CD4-positive, alpha-beta memory T cell (primary cell): ENCODE measurements at regions of chr20 and their contacts with region 1.

Region 1: GRCh38 chr20:1437235-1437904 is 29.3 kb downstream of the NSFL1C start:
- DNase-seq: peak; percentile 73 to 77 (median 74)
- H3K4me3 ChIP-seq: no peak overlapping the region
- H3K4me3 Mint-ChIP-seq: peak overlapping the region in 2 of 8 donors; percentile 27 to 53
- H3K27ac ChIP-seq: no peak overlapping the region
- H3K27ac Mint-ChIP-seq: peak overlapping the region in 3 of 7 donors; percentile 11 to 30 (median 22)
- H3K4me1 ChIP-seq: peaks cover 20% of the 10 kb centered on the region
- H3K4me1 Mint-ChIP-seq: peaks cover 23 to 59% (median 40%) of the 10 kb centered on the region in 4 donors
- H3K27me3 ChIP-seq: no peaks in the 10 kb centered on the region
- H3K27me3 Mint-ChIP-seq: peaks cover 0 to 4% of the 10 kb centered on the region in 2 donors

Region 2: GRCh38 chr20:1212607-1213396 is 224.6 kb before region 1 on chr20:
- CTCF ChIA-PET with region 1: interaction called, 5 read pairs
- POLR2A ChIA-PET with region 1: no interaction called
- intact Hi-C with region 1: loop called (anchors 5 kb)
- DNase-seq: peak; percentile 52 to 63 (median 60)
- H3K4me3 ChIP-seq: no peak overlapping the region
- H3K4me3 Mint-ChIP-seq: peak overlapping the region in 7 of 8 donors; percentile 4 to 52 (median 26)
- H3K27ac ChIP-seq: no peak overlapping the region
- H3K27ac Mint-ChIP-seq: peak overlapping the region in 1 of 7 donors; percentile 13
- H3K4me1 ChIP-seq: peaks cover 33% of the 10 kb centered on the region
- H3K4me1 Mint-ChIP-seq: peaks cover 19 to 28% (median 25%) of the 10 kb centered on the region in 4 donors
- H3K27me3 ChIP-seq: no peaks in the 10 kb centered on the region
- H3K27me3 Mint-ChIP-seq: peaks cover 3 to 6% of the 10 kb centered on the region in 2 donors

Region 3: GRCh38 chr20:1325173-1326030 is 112.0 kb before region 1 on chr20:
- CTCF ChIA-PET with region 1: interaction called, 4 read pairs
- POLR2A ChIA-PET with region 1: interaction called, 3 read pairs
- intact Hi-C with region 1: loop called (anchors 1 kb)
- DNase-seq: peak; percentile 98 to 99 (median 98)
- H3K4me3 ChIP-seq: peak overlapping the region; percentile 58 to 85
- H3K4me3 Mint-ChIP-seq: no peak overlapping the region
- H3K27ac ChIP-seq: peak overlapping the region; percentile 98
- H3K27ac Mint-ChIP-seq: no peak overlapping the region
- H3K4me1 ChIP-seq: peaks cover 42% of the 10 kb centered on the region
- H3K4me1 Mint-ChIP-seq: peaks cover 14 to 24% (median 19%) of the 10 kb centered on the region in 4 donors
- H3K27me3 ChIP-seq: no peaks in the 10 kb centered on the region
- H3K27me3 Mint-ChIP-seq: no peaks in the 10 kb centered on the region

Region 4: GRCh38 chr20:1392823-1393506 is 44.4 kb before region 1 on chr20 and contains the start of gene FKBP1A:
- CTCF ChIA-PET with region 1: interaction called, 9 read pairs
- POLR2A ChIA-PET with region 1: interaction called, 6 read pairs
- intact Hi-C with region 1: loop called (anchors 1 kb)
- DNase-seq: peak; percentile 90 to 91 (median 90)
- H3K4me3 ChIP-seq: peak within 1 kb of the TSS; percentile 58 to 80
- H3K4me3 Mint-ChIP-seq: peak within 1 kb of the TSS; percentile 87 to 98 (median 96)
- H3K27ac ChIP-seq: peak within 1 kb of the TSS; percentile 67
- H3K27ac Mint-ChIP-seq: peak within 1 kb of the TSS; percentile 88 to 98 (median 96)
- H3K4me1 ChIP-seq: peaks cover 51% of the 10 kb centered on the region
- H3K4me1 Mint-ChIP-seq: peaks cover 52 to 76% (median 63%) of the 10 kb centered on the region in 4 donors
- H3K27me3 ChIP-seq: no peaks in the 10 kb centered on the region
- H3K27me3 Mint-ChIP-seq: no peaks in the 10 kb centered on the region
- total RNA-seq, gene FKBP1A: 77.8 to 86.4 TPM

Region 5: DNA sequence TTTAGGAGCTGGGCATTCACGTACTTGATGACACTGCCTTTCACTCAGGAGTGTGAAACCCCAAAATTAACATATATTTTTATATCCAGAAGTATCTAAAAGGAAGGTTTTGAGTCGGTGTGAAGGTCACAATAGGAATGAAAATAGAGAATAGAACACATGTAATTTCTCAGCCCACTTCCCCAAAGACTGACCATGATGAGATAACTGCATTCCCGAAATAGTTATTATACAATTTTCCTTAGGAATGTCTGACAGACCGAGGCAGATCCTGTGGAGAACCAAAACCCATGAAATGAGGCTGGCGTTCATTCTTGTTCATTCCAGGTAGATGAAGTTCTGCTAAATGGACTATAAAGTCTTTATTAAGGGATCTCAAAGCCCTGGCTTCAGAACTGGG is 18.9 kb after region 1 on chr20:
- CTCF ChIA-PET with region 1: interaction called, 34 read pairs
- POLR2A ChIA-PET with region 1: no interaction called
- intact Hi-C with region 1: no loop called
- DNase-seq: no peak
- H3K4me3 ChIP-seq: no peak overlapping the region
- H3K4me3 Mint-ChIP-seq: no peak overlapping the region
- H3K27ac ChIP-seq: no peak overlapping the region
- H3K27ac Mint-ChIP-seq: no peak overlapping the region
- H3K4me1 ChIP-seq: no peaks in the 10 kb centered on the region
- H3K4me1 Mint-ChIP-seq: peaks cover 0 to 22% (median 7%) of the 10 kb centered on the region in 4 donors
- H3K27me3 ChIP-seq: no peaks in the 10 kb centered on the region
- H3K27me3 Mint-ChIP-seq: no peaks in the 10 kb centered on the region